Panc1 (cell line): ENCODE measurements at regions of chr10 and their contacts with region 1.

Region 1: GRCh38 chr10:9302120-9302746 is 1247.7 kb downstream of the GATA3 start:
- DNase-seq: peak; percentile 39
- ATAC-seq: no peak
- H3K4me3 ChIP-seq: no peak overlapping the region
- H3K27ac ChIP-seq: no peak overlapping the region
- H3K4me1 ChIP-seq: no peaks in the 10 kb centered on the region
- H3K27me3 ChIP-seq: peaks cover 3% of the 10 kb centered on the region; the same call in 1 of the 2 replicates
- CTCF ChIP-seq: peak; percentile 29; the same call in 1 of the 2 replicates

Region 2: GRCh38 chr10:9253108-9253507 is 49.1 kb before region 1 on chr10:
- CTCF ChIA-PET with region 1: no interaction called
- POLR2A ChIA-PET with region 1: no interaction called
- in situ Hi-C with region 1: no loop called
- intact Hi-C with region 1: loop called (anchors 2 kb)
- DNase-seq: no peak
- ATAC-seq: no peak
- H3K4me3 ChIP-seq: no peak overlapping the region
- H3K27ac ChIP-seq: no peak overlapping the region
- H3K4me1 ChIP-seq: no peaks in the 10 kb centered on the region
- H3K27me3 ChIP-seq: no peaks in the 10 kb centered on the region
- CTCF ChIP-seq: no peak